Colonic mucosa (tissue), 4 donors: ENCODE measurements at regions of chr20 and their contacts with region 1.

Region 1: GRCh38 chr20:63223221-63224207 is 7.6 kb upstream of the YTHDF1 start:
- DNase-seq: peak; percentile 56
- H3K4me3 ChIP-seq: no peak overlapping the region
- H3K27ac ChIP-seq: no peak overlapping the region
- H3K4me1 ChIP-seq: no peaks in the 10 kb centered on the region
- H3K27me3 ChIP-seq: no peaks in the 10 kb centered on the region
- CTCF ChIP-seq: peak; percentile 64

Region 2: GRCh38 chr20:62627901-62628612 is 595.5 kb before region 1 on chr20:
- intact Hi-C with region 1: no loop called
- DNase-seq: no peak
- H3K4me3 ChIP-seq: no peak overlapping the region
- H3K27ac ChIP-seq: no peak overlapping the region
- H3K4me1 ChIP-seq: peaks cover 12% of the 10 kb centered on the region
- H3K27me3 ChIP-seq: no peaks in the 10 kb centered on the region
- CTCF ChIP-seq: no peak

Region 3: DNA sequence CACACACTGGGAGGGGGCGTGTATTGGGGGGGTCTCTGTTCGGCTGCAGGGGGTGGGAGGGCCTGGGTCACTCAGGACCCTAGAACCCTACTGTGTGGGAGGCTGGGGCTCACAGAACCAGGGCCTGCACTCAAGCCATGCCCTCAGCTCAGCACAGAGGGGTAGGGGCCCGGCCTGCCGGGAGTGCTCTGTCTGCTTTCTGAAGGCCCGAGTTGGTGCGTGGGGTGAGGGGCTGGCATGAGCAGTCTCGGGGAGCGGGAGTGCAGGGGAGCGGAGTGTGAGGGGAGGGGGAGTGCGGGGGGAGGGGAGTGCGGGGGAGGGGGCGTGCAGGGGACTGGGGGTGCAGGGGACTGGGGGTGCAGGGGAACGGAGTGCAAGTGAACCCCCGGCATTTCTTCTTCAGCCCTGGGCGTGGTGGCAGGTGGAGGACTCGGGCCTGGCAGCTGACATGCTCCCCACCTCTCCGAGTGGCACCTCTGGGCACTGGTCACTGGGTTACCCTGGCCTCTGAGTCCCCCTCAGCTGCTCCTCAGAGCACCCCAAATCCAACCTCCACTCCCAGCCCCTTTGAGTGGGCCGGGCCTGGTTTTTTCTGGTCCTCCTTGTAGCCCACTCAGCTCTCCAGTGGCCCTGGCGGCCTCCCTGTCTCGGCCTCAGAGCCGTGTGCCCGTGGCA is 70.5 kb after region 1 on chr20:
- intact Hi-C with region 1: loop called (anchors 2 kb)
- DNase-seq: no peak
- H3K4me3 ChIP-seq: no peak overlapping the region
- H3K27ac ChIP-seq: no peak overlapping the region
- H3K4me1 ChIP-seq: no peaks in the 10 kb centered on the region
- H3K27me3 ChIP-seq: peaks cover 7% of the 10 kb centered on the region
- CTCF ChIP-seq: no peak